Activated CD4-positive, alpha-beta T cell treated with anti-CD3 and anti-CD28 coated beads for 36 hours (primary cell): ENCODE measurements at regions of chr20 and their contacts with region 1.

Region 1: DNA sequence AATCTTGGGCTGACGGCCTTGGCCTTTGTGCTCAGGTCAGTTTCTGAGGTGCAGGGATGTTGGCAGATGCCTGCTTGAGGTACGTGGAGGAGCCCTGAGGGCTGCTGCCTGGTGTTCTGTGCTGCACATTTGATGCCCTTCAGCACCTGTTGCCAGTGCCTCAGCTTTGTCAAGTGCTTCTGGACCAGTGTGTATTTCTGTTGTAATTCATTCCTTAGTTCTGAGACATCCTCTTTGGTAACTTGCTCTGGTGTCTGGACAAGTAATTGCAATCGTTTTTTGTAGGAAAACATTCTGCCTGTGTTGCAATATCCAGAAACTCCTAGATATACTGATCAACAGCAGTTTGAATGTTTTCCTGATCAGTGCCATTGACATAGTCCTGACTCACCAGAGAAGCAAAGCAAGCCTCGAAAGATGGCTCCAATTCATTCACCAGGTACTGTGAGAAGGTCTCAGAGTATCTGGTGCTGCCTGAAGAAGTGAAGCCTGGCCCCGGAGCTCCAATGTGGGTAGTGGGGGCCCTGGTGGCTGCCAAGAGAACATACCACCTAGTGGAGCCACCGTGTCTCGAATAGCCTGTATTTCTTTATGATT is 26.7 kb downstream of the ZNF337 start:
- DNase-seq: no peak
- ATAC-seq: no peak
- H3K4me3 Mint-ChIP-seq: no peak overlapping the region
- H3K27ac Mint-ChIP-seq: no peak overlapping the region
- H3K4me1 Mint-ChIP-seq: no peaks in the 10 kb centered on the region
- H3K27me3 Mint-ChIP-seq: no peaks in the 10 kb centered on the region

Region 2: DNA sequence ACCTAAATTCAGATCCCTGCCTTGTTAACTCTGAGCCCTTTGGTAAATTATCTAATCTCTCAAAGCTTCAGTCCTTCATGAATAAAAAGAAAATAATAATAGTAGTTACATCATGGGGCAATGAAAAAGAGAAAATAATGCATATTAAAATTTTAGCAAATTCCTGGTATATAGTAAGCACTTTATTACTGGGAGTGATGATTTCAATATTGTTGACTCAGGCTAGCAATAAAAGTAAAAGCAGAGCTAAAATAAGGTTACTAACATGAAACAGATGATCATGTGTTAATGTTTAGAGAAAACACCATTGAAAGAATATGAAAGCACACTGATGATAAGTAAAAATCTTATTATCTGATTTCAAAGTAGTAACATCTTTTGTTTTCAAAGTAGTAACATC is 248.8 kb before region 1 on chr20:
- CTCF ChIA-PET with region 1: no interaction called
- POLR2A ChIA-PET with region 1: no interaction called
- intact Hi-C with region 1: loop called in 1 of 2 experiments (anchors 5 kb)
- DNase-seq: no peak
- ATAC-seq: no peak
- H3K4me3 Mint-ChIP-seq: no peak overlapping the region
- H3K27ac Mint-ChIP-seq: no peak overlapping the region
- H3K4me1 Mint-ChIP-seq: peaks cover 18% of the 10 kb centered on the region
- H3K27me3 Mint-ChIP-seq: no peaks in the 10 kb centered on the region

Region 3: GRCh38 chr20:25470045-25470444 is 199.9 kb before region 1 on chr20:
- CTCF ChIA-PET with region 1: no interaction called
- POLR2A ChIA-PET with region 1: no interaction called
- intact Hi-C with region 1: loop called in 1 of 2 experiments (anchors 5 kb)
- DNase-seq: peak; percentile 73
- ATAC-seq: peak; percentile 85
- H3K4me3 Mint-ChIP-seq: no peak overlapping the region
- H3K27ac Mint-ChIP-seq: no peak overlapping the region
- H3K4me1 Mint-ChIP-seq: peaks cover 4% of the 10 kb centered on the region
- H3K27me3 Mint-ChIP-seq: no peaks in the 10 kb centered on the region